BJ (cell line): ENCODE measurements at regions of chr16 and their contacts with region 1.

Region 1: GRCh38 chr16:66275775-66276428 is 90.6 kb upstream of the CDH5 start:
- DNase-seq: no peak
- H3K4me3 ChIP-seq: no peak overlapping the region
- H3K27me3 ChIP-seq: peaks cover 2% of the 10 kb centered on the region
- CTCF ChIP-seq: peak; percentile 76

Region 2: DNA sequence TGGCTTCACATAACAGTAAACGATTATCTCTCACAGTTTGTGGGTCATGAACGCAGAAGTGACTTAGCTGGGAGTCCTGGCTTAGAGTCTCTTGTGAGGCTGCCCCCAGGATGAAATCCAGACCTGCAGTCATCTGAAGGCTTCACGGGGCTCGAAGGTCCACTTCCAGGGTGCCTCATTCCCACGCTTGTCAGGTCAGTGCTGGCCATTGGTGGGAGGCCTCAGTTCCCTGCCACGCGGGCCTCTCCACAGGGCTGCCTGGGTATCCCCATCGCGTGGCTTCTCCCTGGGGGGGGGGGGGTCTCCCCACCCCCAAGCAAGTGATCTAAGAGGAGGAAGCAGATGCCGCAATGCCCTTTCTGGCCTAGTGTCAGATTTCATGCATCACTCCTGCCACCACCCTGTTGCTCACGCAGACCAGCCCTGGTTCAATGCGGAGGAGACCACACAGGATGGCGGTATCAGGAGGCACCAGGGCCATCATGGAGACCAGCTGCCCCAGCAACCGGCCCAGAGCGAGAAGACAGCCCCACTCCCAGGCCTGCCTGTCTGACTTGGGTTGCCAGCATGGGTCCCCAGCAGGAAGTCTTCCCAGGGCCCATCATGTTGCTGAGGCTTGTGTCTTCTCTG is 13.3 kb after region 1 on chr16:
- CTCF ChIA-PET with region 1: interaction called, 13 read pairs
- POLR2A ChIA-PET with region 1: no interaction called
- DNase-seq: no peak
- H3K4me3 ChIP-seq: no peak overlapping the region
- H3K27me3 ChIP-seq: peaks cover 12% of the 10 kb centered on the region
- CTCF ChIP-seq: no peak

Region 3: DNA sequence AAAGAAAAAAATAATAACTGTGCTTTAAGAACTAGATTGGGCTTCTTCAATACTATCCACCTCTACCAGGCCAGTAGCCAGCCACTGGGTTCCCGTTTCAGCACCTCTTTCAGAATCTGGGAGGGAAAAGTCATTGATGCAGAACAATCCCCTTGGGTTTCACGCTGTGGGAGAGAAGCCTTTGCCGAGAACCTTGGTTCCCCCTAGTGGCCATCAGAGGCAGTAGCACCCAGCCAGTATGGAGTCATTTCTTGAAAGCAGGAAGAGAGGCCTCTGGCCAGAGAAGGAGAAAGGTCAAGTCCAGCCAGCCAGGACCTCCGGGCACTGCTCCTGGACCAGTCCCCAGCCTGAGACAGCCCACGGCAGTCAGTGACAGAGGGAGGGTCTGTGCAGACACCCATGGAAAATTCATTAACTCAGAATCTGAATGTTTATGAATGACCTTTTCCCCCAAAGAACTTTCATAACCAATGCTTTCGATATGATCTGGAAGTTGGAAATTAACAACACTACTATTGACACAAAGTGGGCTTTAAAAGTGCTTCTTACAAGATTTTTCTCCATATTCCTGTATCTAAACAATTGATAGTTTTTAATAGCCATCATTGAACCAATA is 39.4 kb after region 1 on chr16:
- CTCF ChIA-PET with region 1: interaction called, 41 read pairs
- POLR2A ChIA-PET with region 1: no interaction called
- DNase-seq: peak; percentile 5
- H3K4me3 ChIP-seq: no peak overlapping the region
- H3K27me3 ChIP-seq: peaks cover 5% of the 10 kb centered on the region
- CTCF ChIP-seq: peak; percentile 99

Region 4: DNA sequence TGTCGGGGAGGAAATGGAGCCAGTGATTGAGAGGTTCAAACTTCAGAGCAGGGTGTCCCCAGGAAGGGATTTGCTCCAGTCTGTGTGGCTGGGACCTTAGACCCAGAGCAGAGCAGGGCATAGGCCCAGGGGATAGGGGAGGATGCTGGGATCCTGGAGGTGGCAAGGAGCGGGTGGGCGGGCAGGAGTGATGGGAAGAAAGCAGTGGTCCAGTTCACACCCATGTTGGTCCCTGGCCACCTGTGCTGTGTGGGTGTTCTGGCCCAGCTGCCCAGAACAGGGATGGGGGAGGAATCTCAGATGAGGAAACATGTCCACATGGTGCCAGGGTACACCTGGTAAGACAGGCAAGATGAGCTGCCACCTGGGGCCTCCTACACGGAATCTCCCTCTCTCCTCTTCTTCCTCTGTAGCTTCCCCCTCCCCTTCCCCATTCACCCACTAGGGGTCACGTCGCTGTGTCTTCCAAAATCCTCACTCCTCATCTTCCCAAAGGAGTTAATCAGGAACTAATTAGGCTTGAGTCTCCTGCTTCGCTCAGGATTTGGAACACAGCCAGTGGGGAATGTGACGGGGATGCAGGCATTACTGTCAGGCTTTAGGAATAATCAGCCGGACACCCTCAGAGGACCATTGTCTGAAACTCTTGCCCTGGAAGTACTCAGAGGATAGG is 153.5 kb after region 1 on chr16:
- CTCF ChIA-PET with region 1: no interaction called
- POLR2A ChIA-PET with region 1: no interaction called
- DNase-seq: no peak
- H3K4me3 ChIP-seq: no peak overlapping the region
- H3K27me3 ChIP-seq: peaks cover 49% of the 10 kb centered on the region
- CTCF ChIP-seq: no peak